ENCODE measurements at regions of chr11 and their contacts with region 1.

Region 1: GRCh38 chr11:128522055-128522942 is 65.1 kb downstream of the ETS1 start:
- DNase-seq: peak; percentile 94
- H3K4me3 Mint-ChIP-seq: peak overlapping the region; percentile 97
- H3K27ac Mint-ChIP-seq: peak overlapping the region; percentile 96
- H3K4me1 Mint-ChIP-seq: peaks cover 42% of the 10 kb centered on the region
- H3K27me3 Mint-ChIP-seq: no peaks in the 10 kb centered on the region

Region 2: DNA sequence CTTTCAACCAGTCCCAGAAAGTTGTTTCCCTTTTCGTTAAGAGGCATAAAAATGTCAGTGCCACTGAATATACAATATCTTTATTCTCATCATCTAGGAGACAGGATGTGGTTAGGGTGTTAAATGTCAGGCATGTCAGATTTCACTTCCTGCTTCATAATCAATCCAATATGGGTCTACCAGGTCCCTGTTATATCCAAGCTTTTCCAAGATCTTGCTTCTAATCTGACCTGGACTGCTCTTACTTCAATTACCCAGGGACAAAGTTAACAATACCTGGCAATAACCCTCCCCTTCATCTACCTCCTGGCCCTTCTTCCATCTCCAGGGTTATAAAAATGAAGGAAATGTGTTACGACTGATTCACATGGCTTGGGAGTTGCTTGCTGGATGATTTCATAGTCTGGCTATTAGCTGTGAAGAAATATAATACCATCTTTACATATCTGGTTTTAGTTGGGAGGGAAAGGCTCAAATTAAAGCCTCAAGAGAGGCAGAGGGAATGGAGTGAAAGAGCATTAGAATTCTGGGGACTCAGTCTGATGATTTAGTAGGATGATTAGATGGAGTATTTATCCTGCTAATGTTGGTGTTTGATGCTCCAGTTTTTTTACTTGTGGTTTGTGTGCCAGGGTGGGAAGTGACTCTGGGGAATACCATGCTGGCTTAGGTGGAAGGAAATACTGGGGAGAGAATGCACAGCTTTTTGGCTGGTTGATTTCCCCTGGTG is 469.2 kb before region 1 on chr11:
- CTCF ChIA-PET with region 1: no interaction called
- POLR2A ChIA-PET with region 1: no interaction called
- intact Hi-C with region 1: loop called (anchors 1 kb)
- DNase-seq: no peak
- H3K4me3 Mint-ChIP-seq: peak overlapping the region; percentile 70
- H3K27ac Mint-ChIP-seq: peak overlapping the region; percentile 94
- H3K4me1 Mint-ChIP-seq: peaks cover 67% of the 10 kb centered on the region
- H3K27me3 Mint-ChIP-seq: no peaks in the 10 kb centered on the region

Region 3: DNA sequence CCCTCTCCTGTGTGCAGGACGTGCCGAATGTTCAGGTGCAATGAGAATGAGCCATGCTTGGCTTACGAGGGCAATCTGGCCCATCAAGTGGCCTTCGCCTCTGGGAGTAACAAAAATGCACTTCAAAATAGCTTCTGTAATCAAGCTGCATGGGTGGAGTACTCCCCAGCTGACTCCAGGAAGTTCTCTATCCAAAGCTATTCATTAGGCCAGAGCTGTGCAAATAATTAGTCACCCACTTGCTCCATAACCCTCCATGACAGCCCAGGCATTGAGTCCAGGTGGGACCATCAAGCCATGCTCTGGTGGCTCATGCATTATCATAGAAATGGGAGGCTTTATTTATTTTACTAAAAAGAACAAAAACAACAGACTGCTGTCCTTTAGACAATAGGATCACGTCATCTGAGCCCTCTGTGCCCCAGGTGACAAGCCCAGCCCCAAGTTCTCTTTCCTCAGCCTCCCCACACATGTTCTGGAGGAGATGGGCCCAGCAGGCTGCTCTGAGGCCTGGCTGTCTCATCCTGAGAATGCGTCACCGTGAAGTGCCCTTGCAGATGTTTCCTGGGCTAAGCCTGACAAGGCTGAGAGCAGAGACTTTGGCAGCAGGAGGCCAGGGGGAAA is 179.7 kb before region 1 on chr11:
- CTCF ChIA-PET with region 1: no interaction called
- POLR2A ChIA-PET with region 1: interaction called, 5 read pairs
- intact Hi-C with region 1: loop called (anchors 2 kb)
- DNase-seq: peak; percentile 93
- H3K4me3 Mint-ChIP-seq: peak overlapping the region; percentile 66
- H3K27ac Mint-ChIP-seq: peak overlapping the region; percentile 88
- H3K4me1 Mint-ChIP-seq: peaks cover 88% of the 10 kb centered on the region
- H3K27me3 Mint-ChIP-seq: no peaks in the 10 kb centered on the region

Region 4: GRCh38 chr11:128482512-128483191 is 39.6 kb before region 1 on chr11:
- CTCF ChIA-PET with region 1: interaction called, 8 read pairs
- POLR2A ChIA-PET with region 1: interaction called, 407 read pairs
- intact Hi-C with region 1: no loop called
- DNase-seq: peak; percentile 80
- H3K4me3 Mint-ChIP-seq: peak overlapping the region; percentile 69
- H3K27ac Mint-ChIP-seq: peak overlapping the region; percentile 92
- H3K4me1 Mint-ChIP-seq: peaks cover 96% of the 10 kb centered on the region
- H3K27me3 Mint-ChIP-seq: no peaks in the 10 kb centered on the region

Region 5: DNA sequence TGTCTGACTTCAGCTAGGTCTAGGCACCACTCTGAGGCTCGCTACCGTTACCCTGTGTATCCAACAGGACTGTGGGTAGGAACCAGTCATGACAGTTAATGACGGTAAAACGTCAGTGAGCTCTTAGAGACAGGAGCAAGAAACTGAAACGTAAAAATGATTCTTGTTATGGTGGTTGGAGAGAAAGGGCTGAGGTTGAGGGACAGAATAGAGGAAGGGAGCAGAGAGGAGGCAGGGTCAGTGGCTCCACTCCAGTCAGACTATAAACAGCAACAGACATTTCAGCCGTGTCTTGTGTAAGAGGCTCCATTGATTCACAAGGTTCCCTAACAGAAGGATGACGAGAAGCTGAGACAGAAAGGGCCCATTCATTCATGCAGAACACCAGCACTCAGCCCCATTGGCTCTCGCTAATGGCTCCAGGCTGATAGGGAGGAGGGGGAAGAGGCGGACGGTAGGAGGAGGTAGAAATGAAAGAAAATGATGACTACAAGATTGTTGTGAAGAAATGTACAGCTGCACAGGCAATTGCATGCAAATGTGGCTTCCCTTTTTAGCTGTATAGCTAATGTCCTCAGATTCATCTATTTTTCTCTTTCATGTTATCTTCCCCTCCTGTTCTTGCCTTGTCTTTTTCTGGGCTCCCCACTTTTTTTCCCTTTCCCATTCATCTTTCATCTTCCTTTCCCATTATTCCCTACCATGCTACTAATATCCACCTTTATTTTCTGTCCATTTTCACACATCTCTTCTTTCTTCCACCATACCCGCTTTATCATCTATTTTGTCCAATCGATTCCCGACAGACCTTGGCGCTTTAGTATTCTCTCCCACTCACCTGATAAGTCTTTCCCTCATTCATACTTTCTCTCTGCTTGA is 30.7 kb after region 1 on chr11:
- CTCF ChIA-PET with region 1: interaction called, 12 read pairs
- POLR2A ChIA-PET with region 1: interaction called, 35 read pairs
- intact Hi-C with region 1: loop called (anchors 1 kb)
- DNase-seq: peak; percentile 72
- H3K4me3 Mint-ChIP-seq: peak overlapping the region; percentile 70
- H3K27ac Mint-ChIP-seq: peak overlapping the region; percentile 94
- H3K4me1 Mint-ChIP-seq: peaks cover 65% of the 10 kb centered on the region
- H3K27me3 Mint-ChIP-seq: no peaks in the 10 kb centered on the region

Region 6: DNA sequence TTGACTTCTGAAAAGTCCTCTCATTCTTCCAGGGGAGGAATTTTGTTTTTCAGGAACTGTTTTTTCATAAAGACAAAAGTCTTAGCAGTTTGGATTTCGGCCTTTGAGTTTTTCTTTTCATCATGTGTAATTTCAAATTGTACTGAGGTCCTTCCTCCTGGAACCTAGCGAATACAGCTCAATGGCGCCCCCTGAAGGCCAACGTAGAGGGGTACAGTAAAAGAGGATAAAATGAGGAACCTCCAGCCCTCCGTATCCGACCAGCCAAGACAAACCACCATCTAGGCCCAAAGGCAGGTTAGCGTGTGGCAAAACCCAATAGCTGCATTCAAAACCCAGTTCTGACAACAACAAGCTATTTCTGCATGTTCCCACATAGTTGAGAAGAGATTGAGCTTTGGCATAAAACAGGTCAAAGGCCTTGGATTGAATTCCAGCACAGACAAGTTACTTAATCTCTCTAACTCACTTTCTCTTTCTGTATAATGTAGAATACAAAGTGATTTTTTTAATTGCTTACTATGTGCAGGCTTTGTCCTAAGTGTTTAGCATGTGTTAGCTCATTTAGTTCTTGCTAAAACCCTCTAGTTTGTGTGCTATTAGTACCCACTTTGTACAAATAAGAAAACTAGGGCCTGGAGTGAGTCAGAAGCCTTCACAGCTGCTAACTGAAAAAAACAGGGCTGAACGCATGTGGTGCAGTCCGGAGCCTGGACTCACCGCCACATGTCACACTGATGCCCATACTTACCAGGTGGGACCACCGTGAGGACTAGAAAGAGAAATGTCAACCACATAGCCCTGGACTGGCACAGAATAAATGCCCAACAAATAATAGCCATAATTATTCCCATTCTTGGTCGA is 108.3 kb after region 1 on chr11:
- CTCF ChIA-PET with region 1: interaction called, 264 read pairs
- POLR2A ChIA-PET with region 1: interaction called, 81 read pairs
- intact Hi-C with region 1: loop called (anchors 1 kb)
- DNase-seq: peak; percentile 94
- H3K4me3 Mint-ChIP-seq: peak overlapping the region; percentile 65
- H3K27ac Mint-ChIP-seq: peak overlapping the region; percentile 92
- H3K4me1 Mint-ChIP-seq: peaks cover 66% of the 10 kb centered on the region
- H3K27me3 Mint-ChIP-seq: no peaks in the 10 kb centered on the region

Region 7: GRCh38 chr11:128831174-128832120 is 309.1 kb after region 1 on chr11:
- CTCF ChIA-PET with region 1: interaction called, 4 read pairs
- POLR2A ChIA-PET with region 1: interaction called, 6 read pairs
- intact Hi-C with region 1: loop called (anchors 5 kb)
- DNase-seq: peak; percentile 93
- H3K4me3 Mint-ChIP-seq: peak overlapping the region; percentile 30
- H3K27ac Mint-ChIP-seq: peak overlapping the region; percentile 89
- H3K4me1 Mint-ChIP-seq: peaks cover 19% of the 10 kb centered on the region
- H3K27me3 Mint-ChIP-seq: no peaks in the 10 kb centered on the region

Region 8: GRCh38 chr11:129077191-129077590 is 554.9 kb after region 1 on chr11:
- CTCF ChIA-PET with region 1: no interaction called
- POLR2A ChIA-PET with region 1: no interaction called
- intact Hi-C with region 1: no loop called
- DNase-seq: no peak
- H3K4me3 Mint-ChIP-seq: no peak overlapping the region
- H3K27ac Mint-ChIP-seq: no peak overlapping the region
- H3K4me1 Mint-ChIP-seq: no peaks in the 10 kb centered on the region
- H3K27me3 Mint-ChIP-seq: peaks cover 1% of the 10 kb centered on the region